Activated naive CD4-positive, alpha-beta T cell treated with anti-CD3 and anti-CD28 coated beads for 36 hours (primary cell): ENCODE measurements at regions of chr2 and their contacts with region 1.

Region 1: DNA sequence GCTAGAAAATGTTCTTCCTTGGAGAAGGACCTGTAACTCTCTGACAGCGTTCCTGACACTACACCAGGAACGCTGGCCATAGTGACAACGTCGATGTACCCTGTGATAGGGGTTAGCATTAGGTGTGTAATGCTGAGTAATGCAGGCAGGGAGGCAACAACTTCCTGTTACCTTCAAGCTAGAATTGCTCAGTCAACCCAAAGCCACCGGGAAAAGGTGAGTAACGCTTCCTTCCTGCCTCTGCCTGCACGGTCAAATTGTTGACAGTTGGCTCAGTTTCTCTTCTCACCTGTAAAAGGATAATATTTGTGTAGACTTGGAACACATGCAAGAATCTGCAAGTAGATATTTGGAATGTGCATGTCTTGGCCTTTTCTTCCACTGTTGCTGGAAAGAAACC is 12.7 kb downstream of the FAM110C start:
- DNase-seq: peak; percentile 81
- H3K4me3 Mint-ChIP-seq: no peak overlapping the region
- H3K27ac Mint-ChIP-seq: peak overlapping the region; percentile 77
- H3K4me1 Mint-ChIP-seq: peaks cover 23% of the 10 kb centered on the region
- H3K27me3 Mint-ChIP-seq: no peaks in the 10 kb centered on the region

Region 2: DNA sequence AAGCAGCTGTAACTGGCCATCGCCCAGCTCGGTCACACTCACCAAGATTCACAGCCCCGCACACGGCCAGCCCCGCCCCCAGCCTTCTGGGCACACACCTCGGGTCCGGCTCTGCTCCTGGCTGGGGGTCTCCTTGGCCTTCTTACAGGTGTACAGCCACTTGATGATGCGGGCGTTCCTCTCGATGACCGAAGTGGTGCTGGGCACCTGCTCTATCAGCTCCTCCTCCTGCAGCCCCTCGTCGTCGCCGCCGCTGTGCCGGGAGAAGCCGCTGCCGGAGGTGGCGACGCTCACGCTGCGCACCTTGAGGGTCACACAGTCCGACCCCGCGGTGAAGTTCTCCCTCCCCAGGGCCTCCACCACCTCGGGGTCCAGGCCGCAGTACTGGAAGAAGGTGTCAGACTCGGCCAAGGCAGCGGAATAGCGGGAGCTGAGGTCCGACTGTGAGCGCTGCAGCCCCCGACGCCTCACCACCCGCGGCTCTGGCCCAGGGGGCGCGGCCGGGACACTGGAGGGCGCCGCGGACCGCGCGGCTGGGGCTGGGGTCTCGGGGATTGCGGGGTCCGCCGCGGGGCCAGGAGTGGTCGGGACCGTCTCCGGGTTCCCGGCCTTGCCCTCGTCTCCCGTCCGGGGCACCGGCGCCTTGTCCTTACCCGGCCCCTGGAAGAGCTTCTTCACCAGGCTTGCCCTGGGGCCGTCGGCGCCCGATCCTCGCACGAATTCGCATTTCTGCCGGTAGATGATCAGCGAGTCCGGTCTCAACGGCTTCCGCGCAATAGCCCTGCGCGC is 11.9 kb after region 1 on chr2:
- CTCF ChIA-PET with region 1: no interaction called
- intact Hi-C with region 1: loop called (anchors 1 kb)
- DNase-seq: no peak
- H3K4me3 Mint-ChIP-seq: peak overlapping the region; percentile 53
- H3K27ac Mint-ChIP-seq: no peak overlapping the region
- H3K4me1 Mint-ChIP-seq: peaks cover 9% of the 10 kb centered on the region
- H3K27me3 Mint-ChIP-seq: peaks cover 37% of the 10 kb centered on the region

Region 3: DNA sequence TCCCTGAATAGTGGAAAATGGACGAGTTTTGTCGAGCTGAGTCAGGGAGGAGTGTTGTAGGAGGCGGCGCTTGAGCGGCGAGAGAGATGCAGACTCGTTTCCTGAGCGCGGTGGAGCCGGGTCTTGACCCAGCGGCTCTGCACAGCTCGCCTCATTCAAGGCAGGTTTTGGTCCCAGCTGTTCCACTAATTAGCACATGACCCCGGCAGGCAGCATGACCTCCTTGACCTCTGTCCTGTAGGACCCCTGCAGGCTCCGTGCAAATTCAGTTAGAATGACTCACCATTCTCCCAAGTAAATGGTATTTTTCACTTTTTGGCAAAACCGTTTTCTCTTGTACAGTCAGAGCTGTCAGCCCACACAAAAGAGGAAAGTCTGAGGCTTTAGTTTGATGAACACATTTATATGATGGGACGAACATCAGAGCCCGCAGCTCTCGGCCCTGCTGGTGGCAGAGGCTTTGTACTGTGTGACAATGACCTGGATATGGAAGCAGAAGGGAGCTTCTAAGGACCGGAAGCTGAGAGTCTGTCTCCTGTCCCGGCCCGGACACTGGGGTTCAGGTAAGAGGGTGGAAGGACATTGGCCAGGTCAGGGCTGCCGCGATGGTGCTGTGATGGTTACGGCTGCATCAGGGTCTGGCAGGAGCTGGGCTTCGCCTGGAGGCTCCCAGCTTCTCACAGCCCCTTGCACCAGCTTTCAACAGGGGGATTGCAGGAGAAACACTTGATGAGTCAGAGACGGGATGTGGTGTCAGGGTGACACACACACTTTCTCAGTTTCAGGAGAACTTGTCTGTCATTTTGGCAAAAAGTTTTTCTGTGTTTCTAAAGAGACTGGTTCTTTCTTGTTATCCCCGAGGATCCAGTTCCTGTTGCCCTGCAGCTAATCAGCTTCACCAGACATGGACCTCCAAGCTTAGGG is 284.1 kb after region 1 on chr2:
- CTCF ChIA-PET with region 1: no interaction called
- intact Hi-C with region 1: no loop called
- DNase-seq: peak; percentile 32
- H3K4me3 Mint-ChIP-seq: no peak overlapping the region
- H3K27ac Mint-ChIP-seq: no peak overlapping the region
- H3K4me1 Mint-ChIP-seq: peaks cover 9% of the 10 kb centered on the region
- H3K27me3 Mint-ChIP-seq: peaks cover 7% of the 10 kb centered on the region